Activated CD8-positive, alpha-beta T cell treated with anti-CD3 and anti-CD28 coated beads for 36 hours (primary cell): ENCODE measurements at regions of chr9 and their contacts with region 1.

Region 1: DNA sequence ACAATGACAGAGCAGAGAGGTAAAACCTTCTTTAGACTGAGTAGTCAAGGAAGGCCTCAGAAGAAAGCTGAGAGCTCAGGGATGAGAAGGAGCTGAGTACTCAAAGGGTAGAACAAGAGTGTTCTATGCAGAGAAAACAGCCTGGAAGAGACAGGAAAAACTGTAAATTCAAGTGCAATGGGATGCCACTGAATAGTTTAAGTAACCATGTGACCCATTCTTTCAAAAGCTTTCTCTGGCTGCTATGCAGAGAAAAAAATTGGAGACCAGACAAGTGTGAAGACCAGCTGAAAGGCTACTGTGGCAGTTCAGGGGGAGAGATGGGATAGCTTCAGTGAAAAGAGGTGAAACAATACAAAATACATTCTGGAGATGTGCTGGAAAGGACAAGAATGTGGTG is 61.3 kb upstream of the RNF38 start:
- DNase-seq: no peak
- ATAC-seq: no peak
- H3K4me3 Mint-ChIP-seq: no peak overlapping the region
- H3K27ac Mint-ChIP-seq: peak overlapping the region; percentile 47
- H3K4me1 Mint-ChIP-seq: peaks cover 50% of the 10 kb centered on the region
- H3K27me3 Mint-ChIP-seq: no peaks in the 10 kb centered on the region
- CTCF ChIP-seq: no peak

Region 2: GRCh38 chr9:36492865-36493264 is 31.5 kb after region 1 on chr9:
- CTCF ChIA-PET with region 1: no interaction called
- POLR2A ChIA-PET with region 1: interaction called, 10 read pairs
- intact Hi-C with region 1: loop called (anchors 5 kb)
- DNase-seq: peak; percentile 35
- ATAC-seq: peak; percentile 48
- H3K4me3 Mint-ChIP-seq: peak overlapping the region; percentile 62
- H3K27ac Mint-ChIP-seq: peak overlapping the region; percentile 94
- H3K4me1 Mint-ChIP-seq: peaks cover 61% of the 10 kb centered on the region
- H3K27me3 Mint-ChIP-seq: no peaks in the 10 kb centered on the region
- CTCF ChIP-seq: no peak